ENCODE measurements at regions of chr19 and their contacts with region 1.

Region 1: GRCh38 chr19:52897144-52897935 is at the start of gene ZNF320:
- DNase-seq: peak; percentile 93 to 94 (median 93)
- H3K4me3 ChIP-seq: peak within 1 kb of the TSS; percentile 81 to 94 (median 93)
- H3K4me3 Mint-ChIP-seq: peak within 1 kb of the TSS; percentile 91 to 94
- H3K27ac ChIP-seq: peak within 1 kb of the TSS; percentile 93 to 96
- H3K27ac Mint-ChIP-seq: peak within 1 kb of the TSS; percentile 84 to 96 (median 92)
- H3K4me1 ChIP-seq: peaks cover 13 to 20% of the 10 kb centered on the region in 2 donors
- H3K4me1 Mint-ChIP-seq: peaks cover 13% of the 10 kb centered on the region
- H3K27me3 ChIP-seq: no peaks in the 10 kb centered on the region
- H3K27me3 Mint-ChIP-seq: peaks cover 0 to 6% (median 4%) of the 10 kb centered on the region in 3 donors
- CTCF ChIP-seq: no peak
- polyA plus RNA-seq, gene ZNF320: 1.6 to 4.4 (median 3.4) TPM

Region 2: GRCh38 chr19:52922841-52923777 is 25.8 kb after region 1 on chr19 and contains the start of gene ZNF888:
- intact Hi-C with region 1: loop called (anchors 2 kb)
- DNase-seq: peak; percentile 82 to 85 (median 83)
- H3K4me3 ChIP-seq: peak within 1 kb of the TSS; percentile 62 to 89 (median 87)
- H3K4me3 Mint-ChIP-seq: peak within 1 kb of the TSS; percentile 93 to 96
- H3K27ac ChIP-seq: peak within 1 kb of the TSS; percentile 83 to 87
- H3K27ac Mint-ChIP-seq: peak within 1 kb of the TSS; percentile 93 to 98 (median 95)
- H3K4me1 ChIP-seq: peaks cover 24 to 29% of the 10 kb centered on the region in 2 donors
- H3K4me1 Mint-ChIP-seq: peaks cover 34% of the 10 kb centered on the region
- H3K27me3 ChIP-seq: no peaks in the 10 kb centered on the region
- H3K27me3 Mint-ChIP-seq: peaks cover 0 to 1% (median 0%) of the 10 kb centered on the region in 3 donors
- CTCF ChIP-seq: no peak
- polyA plus RNA-seq, gene ZNF888: 0.71 to 1.7 (median 1.4) TPM

Region 3: GRCh38 chr19:52942386-52943133 is 45.2 kb after region 1 on chr19:
- intact Hi-C with region 1: loop called in 1 of 2 experiments (anchors 2 kb)
- DNase-seq: peak; percentile 87 to 89 (median 88)
- H3K4me3 ChIP-seq: peak overlapping the region; percentile 75 to 99 (median 91)
- H3K4me3 Mint-ChIP-seq: peak overlapping the region; percentile 95 to 100
- H3K27ac ChIP-seq: peak overlapping the region; percentile 47 to 92
- H3K27ac Mint-ChIP-seq: peak overlapping the region; percentile 84 to 95 (median 93)
- H3K4me1 ChIP-seq: peaks cover 25 to 42% of the 10 kb centered on the region in 2 donors
- H3K4me1 Mint-ChIP-seq: peaks cover 47% of the 10 kb centered on the region
- H3K27me3 ChIP-seq: no peaks in the 10 kb centered on the region
- H3K27me3 Mint-ChIP-seq: peaks cover 3 to 10% (median 9%) of the 10 kb centered on the region in 3 donors
- CTCF ChIP-seq: no peak

Region 4: GRCh38 chr19:53103198-53103944 is 206.0 kb after region 1 on chr19 and contains the start of gene ZNF160:
- intact Hi-C with region 1: loop called in 1 of 2 experiments (anchors 2 kb)
- DNase-seq: peak; percentile 92 to 97 (median 92)
- H3K4me3 ChIP-seq: peak within 1 kb of the TSS; percentile 57 to 95 (median 93)
- H3K4me3 Mint-ChIP-seq: peak within 1 kb of the TSS; percentile 90 to 92
- H3K27ac ChIP-seq: peak within 1 kb of the TSS; percentile 89 to 93
- H3K27ac Mint-ChIP-seq: peak within 1 kb of the TSS; percentile 86 to 96 (median 93)
- H3K4me1 ChIP-seq: peaks cover 19 to 24% of the 10 kb centered on the region in 2 donors
- H3K4me1 Mint-ChIP-seq: peaks cover 17% of the 10 kb centered on the region
- H3K27me3 ChIP-seq: no peaks in the 10 kb centered on the region
- H3K27me3 Mint-ChIP-seq: peaks cover 2 to 9% (median 4%) of the 10 kb centered on the region in 3 donors
- CTCF ChIP-seq: no peak
- polyA plus RNA-seq, gene ZNF160: 6.4 to 24.5 (median 7.7) TPM

Measured in CD14-positive monocyte (primary cell).